ENCODE measurements at regions of chr14 and their contacts with region 1.

Region 1: DNA sequence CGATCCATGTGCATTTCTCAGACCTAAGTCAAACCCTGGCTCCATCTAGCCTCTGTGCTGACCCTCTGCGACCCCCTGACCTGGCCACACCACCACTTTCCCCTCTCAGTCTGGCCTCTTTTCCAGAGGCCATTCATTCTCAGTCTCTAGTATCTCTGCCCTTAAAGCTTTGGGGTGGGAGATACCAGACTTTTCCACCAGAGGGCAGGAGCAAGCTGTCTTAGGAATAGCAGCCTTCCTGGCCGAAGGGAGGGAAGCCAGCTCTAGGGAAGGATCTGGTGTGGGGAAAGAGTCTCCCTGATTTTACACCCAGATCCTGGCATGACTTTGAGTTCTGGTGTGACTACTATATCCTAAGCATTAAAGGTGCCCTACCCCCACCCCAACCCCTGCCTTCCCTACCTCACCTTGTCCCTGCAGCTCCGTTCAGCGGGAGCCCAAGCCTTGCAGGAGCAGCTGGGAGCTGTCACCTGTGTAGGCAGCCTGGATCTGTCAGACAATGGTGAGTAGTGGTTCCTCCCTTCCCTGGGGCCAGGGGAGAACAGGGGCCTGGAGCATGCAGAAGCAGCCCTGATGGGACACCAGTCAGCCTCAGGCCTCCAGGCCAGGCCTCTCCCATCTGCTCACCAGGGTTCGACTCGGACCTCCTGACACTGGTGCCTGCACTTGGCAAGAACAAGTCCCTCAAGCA is 6.6 kb downstream of the CARMIL3 start:
- DNase-seq: peak; percentile 16
- H3K4me3 ChIP-seq: no peak overlapping the region
- CTCF ChIP-seq: peak; percentile 82

Region 2: GRCh38 chr14:24075485-24076301 is 17.3 kb after region 1 on chr14:
- CTCF ChIA-PET with region 1: interaction called, 74 read pairs
- POLR2A ChIA-PET with region 1: no interaction called
- DNase-seq: no peak
- H3K4me3 ChIP-seq: no peak overlapping the region
- CTCF ChIP-seq: no peak

Region 3: DNA sequence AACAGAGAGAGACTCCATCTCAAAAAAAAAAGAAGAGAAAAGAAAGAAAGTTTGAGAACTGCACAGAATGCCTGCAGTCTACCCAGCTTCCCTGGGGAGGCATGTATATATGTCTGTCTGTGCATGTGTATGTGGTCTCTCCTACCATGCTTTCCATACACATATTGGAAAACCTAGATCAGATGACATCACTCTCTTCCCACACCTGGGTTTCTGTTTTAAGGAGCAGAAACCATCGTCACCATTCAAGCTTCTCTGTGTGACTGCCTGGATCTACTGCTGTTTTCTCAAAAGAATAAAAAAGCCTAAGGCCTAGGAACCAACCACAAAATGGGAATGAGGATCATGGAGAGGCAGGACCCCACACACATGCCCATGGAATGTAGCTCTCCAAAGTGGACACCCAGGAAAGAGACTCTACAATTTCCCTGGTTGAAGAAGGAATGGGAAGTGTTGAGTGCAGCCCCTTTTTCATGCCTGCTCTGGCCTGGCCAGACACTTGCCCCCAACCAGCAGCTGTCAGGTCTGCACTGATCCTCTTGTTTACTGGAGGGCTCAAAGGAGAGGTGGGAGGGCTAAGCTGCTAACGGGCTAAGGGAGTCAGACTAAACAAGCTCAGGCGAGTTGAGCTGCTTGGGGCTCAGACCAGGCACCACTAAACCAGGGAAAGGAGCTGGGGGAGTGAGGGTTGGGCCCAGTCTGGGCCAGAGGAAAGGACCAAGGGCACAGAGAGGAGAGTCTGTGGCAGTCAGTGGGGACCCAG is 28.0 kb after region 1 on chr14:
- CTCF ChIA-PET with region 1: interaction called, 536 read pairs
- POLR2A ChIA-PET with region 1: interaction called, 7 read pairs
- DNase-seq: no peak
- H3K4me3 ChIP-seq: no peak overlapping the region
- CTCF ChIP-seq: no peak

Region 4: GRCh38 chr14:24108336-24108874 is 50.0 kb after region 1 on chr14:
- CTCF ChIA-PET with region 1: interaction called, 247 read pairs
- POLR2A ChIA-PET with region 1: interaction called, 20 read pairs
- DNase-seq: no peak
- H3K4me3 ChIP-seq: no peak overlapping the region
- CTCF ChIP-seq: no peak

Region 5: DNA sequence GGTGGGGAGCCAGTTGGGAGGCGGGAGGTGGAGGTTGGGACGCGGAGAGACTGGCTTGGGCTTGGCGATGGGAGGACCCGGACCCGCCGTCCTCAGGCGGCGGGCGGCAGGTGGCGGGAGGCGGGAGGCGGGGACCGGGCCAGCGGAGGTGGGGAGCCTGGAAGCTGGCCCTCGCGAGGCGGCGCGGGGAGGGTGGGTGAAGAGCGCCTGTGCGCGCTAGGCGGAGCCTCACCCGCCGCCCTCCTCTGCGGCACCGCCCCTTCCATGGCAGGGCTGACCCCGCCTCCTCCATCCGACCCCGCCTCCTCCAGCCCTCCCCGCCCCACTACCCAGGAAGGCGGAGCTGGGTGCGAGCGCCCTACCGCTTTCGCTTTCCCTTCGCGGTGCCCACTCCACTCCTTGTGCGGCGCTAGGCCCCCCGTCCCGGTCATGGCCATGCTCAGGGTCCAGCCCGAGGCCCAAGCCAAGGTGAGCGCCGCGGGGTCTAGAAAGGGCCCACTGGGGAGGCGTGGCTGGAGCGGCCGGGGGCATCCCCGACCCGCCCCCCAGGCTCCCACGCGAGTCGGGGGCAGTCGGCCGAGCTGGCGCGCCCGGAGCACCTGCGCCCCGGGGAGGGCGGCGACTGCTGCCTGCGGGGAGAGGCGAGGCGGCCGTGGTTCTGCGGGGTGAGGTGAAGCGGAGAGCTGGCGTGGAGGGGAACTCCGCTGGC is 77.6 kb after region 1 on chr14 and contains the start of gene PSME1:
- CTCF ChIA-PET with region 1: interaction called, 16 read pairs
- POLR2A ChIA-PET with region 1: no interaction called
- DNase-seq: no peak
- H3K4me3 ChIP-seq: peak within 1 kb of the TSS; percentile 73
- CTCF ChIP-seq: no peak

Region 6: DNA sequence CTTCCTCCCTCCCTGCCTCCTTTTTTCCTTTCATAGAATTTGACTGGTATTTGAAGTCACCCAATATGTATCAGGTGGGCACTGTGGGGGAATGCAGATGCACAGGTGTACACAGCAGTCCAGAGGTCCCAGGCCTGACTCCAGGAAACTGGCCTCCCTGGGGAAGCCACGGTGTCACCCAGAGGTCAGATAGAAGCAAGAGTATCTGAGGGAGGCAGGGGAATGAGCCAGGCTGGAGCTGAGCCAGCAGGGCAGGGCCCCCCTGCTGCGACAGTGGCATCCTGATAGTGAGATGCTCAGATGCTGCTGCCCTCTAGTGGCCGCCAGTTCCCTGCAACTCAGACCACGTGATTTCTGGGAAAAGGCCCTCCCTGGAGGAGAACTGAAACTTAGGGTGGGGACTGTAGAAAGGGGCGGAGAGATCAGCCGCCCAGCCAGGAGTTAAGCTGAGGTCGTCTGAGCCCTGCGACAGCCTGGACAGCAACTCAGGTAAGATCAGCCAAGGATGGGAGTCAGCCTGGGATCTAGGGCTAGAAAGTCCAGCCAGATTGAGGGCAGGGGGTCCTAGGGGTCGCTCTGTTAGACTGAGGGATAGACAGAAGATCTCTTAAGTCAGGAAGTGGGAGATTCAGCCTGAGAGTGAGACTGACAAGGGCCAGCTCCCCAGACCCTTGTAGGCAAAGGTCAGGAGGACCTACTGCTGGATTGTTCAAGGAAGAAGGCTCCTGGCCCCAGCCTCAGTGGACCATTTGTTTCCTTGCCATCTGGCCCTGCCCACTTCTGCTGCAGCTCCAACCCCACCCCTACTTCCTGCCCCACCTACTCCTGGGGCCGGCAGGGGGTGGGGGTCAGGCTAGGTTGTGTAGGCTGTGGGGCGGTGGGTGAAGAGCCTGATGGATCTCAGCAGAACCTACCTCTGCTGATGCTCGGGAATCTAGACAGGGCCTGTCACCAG is 102.7 kb after region 1 on chr14 and contains the start of gene IRF9:
- CTCF ChIA-PET with region 1: interaction called, 55 read pairs
- POLR2A ChIA-PET with region 1: no interaction called
- DNase-seq: peak; percentile 72
- H3K4me3 ChIP-seq: peak within 1 kb of the TSS; percentile 93
- CTCF ChIP-seq: peak; percentile 98